GM12878 (cell line): ENCODE measurements at regions of chr3 and their contacts with region 1.

Region 1: GRCh38 chr3:99833617-99834205 is 16.0 kb downstream of the CMSS1 start:
- DNase-seq: no peak
- ATAC-seq: no peak
- H3K4me3 ChIP-seq: no peak overlapping the region
- H3K27ac ChIP-seq: no peak overlapping the region
- H3K4me1 ChIP-seq: peaks cover 4% of the 10 kb centered on the region; the same call in 1 of the 2 replicates
- H3K27me3 ChIP-seq: no peaks in the 10 kb centered on the region
- CTCF ChIP-seq: no peak
- EP300 ChIP-seq: no peak
- POLR2A ChIP-seq: no peak
- RAD21 ChIP-seq: no peak

Region 2: GRCh38 chr3:99774467-99774866 is 59.2 kb before region 1 on chr3:
- CTCF ChIA-PET with region 1: no interaction called
- POLR2A ChIA-PET with region 1: no interaction called
- RAD21 ChIA-PET with region 1: no interaction called
- SMC1A ChIA-PET with region 1: no interaction called
- in situ Hi-C with region 1: no loop called
- intact Hi-C with region 1: no loop called
- DNase-seq: peak; percentile 28
- ATAC-seq: peak; percentile 82
- H3K4me3 ChIP-seq: no peak overlapping the region
- H3K27ac ChIP-seq: no peak overlapping the region
- H3K4me1 ChIP-seq: no peaks in the 10 kb centered on the region
- H3K27me3 ChIP-seq: no peaks in the 10 kb centered on the region; a peak in 1 of 4 replicates
- CTCF ChIP-seq: no peak
- EP300 ChIP-seq: no peak
- POLR2A ChIP-seq: no peak
- RAD21 ChIP-seq: no peak

Region 3: DNA sequence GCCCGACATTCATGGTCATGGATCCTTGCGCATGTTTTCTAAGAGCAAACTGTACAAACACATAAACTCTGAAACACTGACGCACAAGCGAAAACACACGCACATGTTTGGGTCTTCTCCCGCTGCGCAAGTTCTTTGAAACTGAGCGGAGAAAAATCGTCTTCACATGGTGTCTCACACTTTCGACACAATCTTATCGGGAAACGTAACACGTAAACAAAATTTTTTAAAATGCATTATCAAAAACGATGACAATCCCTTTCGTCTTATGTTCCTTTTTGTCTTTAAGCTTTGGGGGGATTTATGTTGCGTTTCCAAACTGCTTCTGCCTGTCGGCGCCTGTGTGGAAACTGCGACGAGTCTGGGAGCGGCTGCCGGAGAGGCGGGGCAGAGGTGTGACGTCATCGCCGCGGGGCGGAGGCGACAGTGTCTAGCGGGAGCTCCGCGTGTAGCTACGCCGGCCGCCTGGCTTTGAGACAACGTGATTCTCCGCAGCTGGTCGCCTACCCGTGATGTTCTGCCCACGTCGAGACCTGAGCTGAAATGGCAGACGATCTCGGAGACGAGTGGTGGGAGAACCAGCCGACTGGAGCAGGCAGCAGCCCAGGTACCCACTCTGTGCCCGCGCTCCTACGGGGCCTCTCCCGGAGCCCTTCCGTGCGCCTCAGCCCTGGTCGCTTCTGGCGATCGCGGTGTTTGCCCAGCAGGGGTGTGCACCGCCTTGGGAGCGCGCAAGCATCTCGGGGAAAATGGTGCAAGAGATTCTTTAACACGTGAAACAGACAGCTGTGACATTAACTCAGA is 16.1 kb before region 1 on chr3 and contains the start of gene CMSS1:
- CTCF ChIA-PET with region 1: interaction called, 34 read pairs
- POLR2A ChIA-PET with region 1: no interaction called
- RAD21 ChIA-PET with region 1: interaction called, 4 read pairs
- SMC1A ChIA-PET with region 1: interaction called, 14 read pairs
- in situ Hi-C with region 1: no loop called
- intact Hi-C with region 1: no loop called
- DNase-seq: peak; percentile 81
- ATAC-seq: peak; percentile 95
- H3K4me3 ChIP-seq: peak within 1 kb of the TSS; percentile 75
- H3K27ac ChIP-seq: peak within 1 kb of the TSS; percentile 99
- H3K4me1 ChIP-seq: no peaks in the 10 kb centered on the region
- H3K27me3 ChIP-seq: no peaks in the 10 kb centered on the region
- CTCF ChIP-seq: peak in 2 of 3 experiments; percentile 5 to 14; a peak in 2 of 6 replicates
- EP300 ChIP-seq: peak in 1 of 2 experiments; percentile 98; a peak in 2 of 4 replicates
- POLR2A ChIP-seq: peak; percentile 95
- RAD21 ChIP-seq: no peak
- polyA plus RNA-seq, gene CMSS1: 77.8 to 118 TPM

Region 4: GRCh38 chr3:100060685-100061484 is 227.2 kb after region 1 on chr3:
- CTCF ChIA-PET with region 1: interaction called, 13 read pairs
- POLR2A ChIA-PET with region 1: no interaction called
- RAD21 ChIA-PET with region 1: no interaction called
- SMC1A ChIA-PET with region 1: interaction called, 4 read pairs
- in situ Hi-C with region 1: loop called (anchors 5 kb)
- intact Hi-C with region 1: no loop called
- DNase-seq: no peak
- ATAC-seq: peak; percentile 32; the same call in 2 of the 3 replicates
- H3K4me3 ChIP-seq: no peak overlapping the region
- H3K27ac ChIP-seq: no peak overlapping the region
- H3K4me1 ChIP-seq: no peaks in the 10 kb centered on the region; the same call in 1 of the 2 replicates
- H3K27me3 ChIP-seq: no peaks in the 10 kb centered on the region
- CTCF ChIP-seq: no peak
- EP300 ChIP-seq: no peak
- POLR2A ChIP-seq: no peak
- RAD21 ChIP-seq: no peak

Region 5: DNA sequence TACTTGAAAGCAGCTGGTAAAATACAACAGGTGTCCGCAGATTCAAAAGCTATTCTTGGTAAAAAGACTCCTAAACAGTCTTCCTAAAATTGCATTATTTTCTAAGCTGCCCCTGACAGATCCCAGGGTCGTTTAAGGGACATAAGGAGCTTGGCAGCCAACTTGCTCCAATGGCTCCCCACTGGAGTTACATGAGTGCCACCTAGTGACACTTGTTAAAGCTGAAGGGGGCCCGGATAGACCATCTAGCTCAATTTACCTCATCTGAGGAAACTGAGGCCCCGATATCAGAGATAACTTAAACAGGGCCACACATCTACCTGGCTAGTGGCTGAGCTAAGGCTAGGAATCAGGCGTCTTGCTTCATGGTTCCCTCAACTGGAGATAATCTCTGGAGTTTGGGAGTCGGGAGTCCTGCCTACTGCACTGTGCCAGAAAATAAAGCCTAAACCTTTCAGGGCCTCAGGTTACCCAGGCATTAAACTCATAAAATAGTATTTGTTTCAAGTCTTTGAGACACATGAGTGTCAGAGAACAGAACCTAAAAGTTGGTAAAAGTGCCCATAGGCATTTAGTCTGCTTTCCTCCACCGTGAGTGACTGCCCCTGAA is 420.6 kb after region 1 on chr3:
- CTCF ChIA-PET with region 1: interaction called, 73 read pairs
- POLR2A ChIA-PET with region 1: interaction called, 4 read pairs
- RAD21 ChIA-PET with region 1: interaction called, 63 read pairs
- SMC1A ChIA-PET with region 1: interaction called, 41 read pairs
- in situ Hi-C with region 1: loop called (anchors 5 kb)
- intact Hi-C with region 1: loop called (anchors 1 kb)
- DNase-seq: no peak
- ATAC-seq: peak; percentile 95
- H3K4me3 ChIP-seq: no peak overlapping the region
- H3K27ac ChIP-seq: no peak overlapping the region
- H3K4me1 ChIP-seq: no peaks in the 10 kb centered on the region
- H3K27me3 ChIP-seq: no peaks in the 10 kb centered on the region
- CTCF ChIP-seq: peak; percentile 75 to 83 (median 78)
- EP300 ChIP-seq: no peak
- POLR2A ChIP-seq: no peak
- RAD21 ChIP-seq: peak; percentile 99

Region 6: GRCh38 chr3:100316641-100317069 is 482.9 kb after region 1 on chr3:
- CTCF ChIA-PET with region 1: interaction called, 4 read pairs
- POLR2A ChIA-PET with region 1: no interaction called
- RAD21 ChIA-PET with region 1: interaction called, 10 read pairs
- SMC1A ChIA-PET with region 1: interaction called, 4 read pairs
- in situ Hi-C with region 1: no loop called
- intact Hi-C with region 1: no loop called
- DNase-seq: no peak
- ATAC-seq: peak; percentile 80
- H3K4me3 ChIP-seq: no peak overlapping the region
- H3K27ac ChIP-seq: no peak overlapping the region
- H3K4me1 ChIP-seq: peaks cover 3% of the 10 kb centered on the region; the same call in 1 of the 2 replicates
- H3K27me3 ChIP-seq: no peaks in the 10 kb centered on the region
- CTCF ChIP-seq: peak; percentile 66 to 67 (median 67)
- EP300 ChIP-seq: no peak
- POLR2A ChIP-seq: no peak
- RAD21 ChIP-seq: peak; percentile 81

Region 7: DNA sequence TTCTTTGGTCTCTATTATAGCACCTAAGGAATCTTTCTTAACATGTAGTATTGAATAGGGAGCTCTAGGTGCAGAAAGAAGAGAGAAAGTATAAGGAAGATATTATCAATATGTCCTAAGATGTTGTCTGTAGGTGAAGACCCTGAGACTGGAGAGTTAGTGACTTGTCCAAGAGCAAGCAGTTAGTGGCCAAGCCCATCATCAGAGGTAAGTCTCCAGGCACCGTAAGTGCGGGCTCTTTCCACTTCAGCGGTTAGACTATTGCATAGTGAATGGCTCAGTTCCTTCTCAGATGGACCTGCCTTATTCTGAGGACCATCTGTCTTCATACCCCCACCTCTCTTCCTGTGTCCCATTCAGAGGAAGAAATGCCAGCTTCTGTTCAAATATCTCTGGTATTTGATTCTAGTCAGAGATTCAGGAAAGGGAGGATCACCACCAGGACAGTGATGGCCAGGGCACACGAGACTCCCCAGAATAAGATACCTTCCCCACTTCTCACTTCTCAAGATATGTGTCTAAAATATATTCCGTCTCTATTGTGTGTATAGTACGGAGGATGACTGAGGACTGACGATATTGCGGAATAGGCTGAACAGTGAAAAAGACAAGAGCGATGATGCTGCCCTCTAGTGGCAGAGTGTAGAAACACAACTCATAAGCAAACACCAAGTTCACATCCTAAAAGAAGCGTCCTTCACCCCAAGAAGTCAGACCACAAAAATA is 756.6 kb after region 1 on chr3:
- CTCF ChIA-PET with region 1: interaction called, 6 read pairs
- POLR2A ChIA-PET with region 1: no interaction called
- RAD21 ChIA-PET with region 1: interaction called, 12 read pairs
- SMC1A ChIA-PET with region 1: interaction called, 5 read pairs
- in situ Hi-C with region 1: loop called (anchors 10 kb)
- intact Hi-C with region 1: loop called (anchors 5 kb)
- DNase-seq: peak; percentile 68
- ATAC-seq: peak; percentile 95
- H3K4me3 ChIP-seq: no peak overlapping the region
- H3K27ac ChIP-seq: no peak overlapping the region
- H3K4me1 ChIP-seq: no peaks in the 10 kb centered on the region
- H3K27me3 ChIP-seq: no peaks in the 10 kb centered on the region
- CTCF ChIP-seq: peak; percentile 77 to 91 (median 80); a peak in 5 of 6 replicates
- EP300 ChIP-seq: no peak
- POLR2A ChIP-seq: no peak
- RAD21 ChIP-seq: peak; percentile 95